ENCODE measurements at regions of chr18 and their contacts with region 1.

Region 1: GRCh38 chr18:26468931-26469340 is 79.4 kb downstream of the KCTD1 start:
- DNase-seq: peak in 1 of 2 experiments; percentile 73
- H3K4me3 ChIP-seq: no peak overlapping the region
- H3K27ac ChIP-seq: no peak overlapping the region
- H3K4me1 ChIP-seq: peaks cover 0 to 3% (median 2%) of the 10 kb centered on the region in 4 experiments; a peak in 5 of 7 replicates
- H3K27me3 ChIP-seq: no peaks in the 10 kb centered on the region
- CTCF ChIP-seq: peak; percentile 75 to 86 (median 75)
- EP300 ChIP-seq: no peak
- POLR2A ChIP-seq: no peak
- RAD21 ChIP-seq: peak; percentile 51 to 63

Region 2: GRCh38 chr18:26376106-26376505 is 92.8 kb before region 1 on chr18:
- CTCF ChIA-PET with region 1: no interaction called
- POLR2A ChIA-PET with region 1: no interaction called
- DNase-seq: no peak
- H3K4me3 ChIP-seq: no peak overlapping the region
- H3K27ac ChIP-seq: no peak overlapping the region
- H3K4me1 ChIP-seq: no peaks in the 10 kb centered on the region
- H3K27me3 ChIP-seq: no peaks in the 10 kb centered on the region
- CTCF ChIP-seq: no peak
- EP300 ChIP-seq: no peak
- POLR2A ChIP-seq: no peak
- RAD21 ChIP-seq: no peak

Region 3: DNA sequence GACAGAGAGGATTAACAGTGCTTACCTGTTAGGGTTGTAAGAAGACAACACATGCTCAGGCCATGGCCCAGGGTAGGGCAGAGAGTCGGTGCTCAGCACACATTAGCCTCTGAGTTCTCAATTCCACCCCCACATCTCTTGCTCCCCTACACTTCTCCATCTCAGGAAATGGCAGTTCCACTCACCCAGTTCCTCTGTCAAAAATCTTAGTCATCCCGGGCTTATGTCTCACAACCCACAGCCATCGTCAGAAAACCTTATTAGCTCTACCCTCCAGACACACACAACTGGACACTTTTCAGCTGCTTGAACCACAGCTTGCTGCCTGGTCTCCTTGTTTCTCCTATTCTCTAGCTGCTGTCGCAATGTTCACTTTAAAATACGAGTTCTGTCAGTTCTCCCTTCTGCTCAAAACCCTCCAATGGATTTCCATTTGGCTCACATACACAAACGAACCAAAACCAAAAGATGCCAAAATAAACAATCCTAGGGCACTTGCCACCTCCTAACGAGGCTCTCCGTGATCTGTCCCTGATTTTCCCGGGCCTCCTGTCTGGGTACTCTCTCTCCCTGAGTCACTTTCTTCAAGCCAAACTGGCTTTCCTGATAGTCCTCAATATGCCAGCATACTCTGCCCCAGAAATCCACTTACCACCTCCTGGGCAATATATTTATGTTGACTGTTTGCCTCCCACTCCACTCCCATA is 10.3 kb before region 1 on chr18:
- CTCF ChIA-PET with region 1: interaction called, 22 read pairs
- POLR2A ChIA-PET with region 1: interaction called, 3 read pairs
- DNase-seq: no peak
- H3K4me3 ChIP-seq: no peak overlapping the region
- H3K27ac ChIP-seq: no peak overlapping the region
- H3K4me1 ChIP-seq: peaks cover 3 to 7% (median 6%) of the 10 kb centered on the region in 4 experiments; a peak in 6 of 7 replicates
- H3K27me3 ChIP-seq: peaks cover 0 to 7% (median 5%) of the 10 kb centered on the region in 4 experiments; a peak in 3 of 7 replicates
- CTCF ChIP-seq: no peak
- EP300 ChIP-seq: no peak
- POLR2A ChIP-seq: no peak
- RAD21 ChIP-seq: no peak

Region 4: DNA sequence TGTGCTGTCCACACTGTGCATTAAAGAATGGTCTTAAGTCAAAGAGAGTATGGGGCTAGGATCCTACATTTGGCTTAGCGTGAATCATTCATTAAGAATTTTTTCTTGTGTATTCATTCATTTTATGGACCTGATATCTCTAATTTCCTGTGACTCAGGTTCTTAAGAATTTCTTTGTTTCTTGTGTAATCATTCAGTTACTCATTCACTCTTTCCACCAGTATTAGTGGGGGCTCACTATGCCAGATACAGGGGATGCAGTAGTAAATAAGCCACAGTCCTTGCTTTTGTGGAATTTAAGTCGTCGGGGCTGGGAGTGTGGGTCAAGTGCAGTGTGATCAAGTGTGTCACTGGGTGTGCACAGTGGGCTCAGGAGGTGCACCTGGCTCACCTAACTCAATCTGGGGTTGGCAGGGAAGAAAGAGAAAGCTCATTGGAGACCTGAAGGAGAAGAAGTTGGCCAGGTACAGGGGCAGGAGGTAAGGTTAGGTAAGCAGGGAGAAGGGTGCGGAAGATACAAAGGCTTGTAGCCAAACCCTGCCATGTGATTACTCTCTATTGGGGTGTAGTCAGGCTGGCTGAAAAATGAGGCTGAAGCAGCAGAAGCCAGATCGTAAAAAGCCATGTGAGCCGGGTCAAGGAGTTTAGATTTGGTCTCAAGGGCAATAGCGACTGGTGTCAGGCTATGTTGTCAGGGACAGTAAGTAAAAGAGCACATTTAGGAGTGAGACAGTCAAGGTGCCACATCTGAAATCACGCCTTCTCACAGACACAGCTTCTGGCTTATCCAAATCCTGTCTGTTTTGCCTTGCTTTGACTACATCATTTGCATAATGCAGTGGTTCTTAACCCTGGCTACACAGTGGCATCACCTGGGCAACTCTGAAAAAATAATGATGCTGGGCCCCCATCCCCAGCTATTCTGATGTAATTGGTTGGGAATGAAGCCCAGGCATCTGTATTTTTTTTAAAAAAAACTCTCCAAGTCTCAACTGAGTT is 12.3 kb after region 1 on chr18:
- CTCF ChIA-PET with region 1: interaction called, 67 read pairs
- POLR2A ChIA-PET with region 1: no interaction called
- DNase-seq: no peak
- H3K4me3 ChIP-seq: no peak overlapping the region
- H3K27ac ChIP-seq: no peak overlapping the region
- H3K4me1 ChIP-seq: peaks cover 9 to 28% (median 21%) of the 10 kb centered on the region in 4 experiments
- H3K27me3 ChIP-seq: peaks cover 0 to 1% (median 0%) of the 10 kb centered on the region in 4 experiments; a peak in 1 of 7 replicates
- CTCF ChIP-seq: no peak
- EP300 ChIP-seq: no peak
- POLR2A ChIP-seq: no peak
- RAD21 ChIP-seq: no peak

Region 5: DNA sequence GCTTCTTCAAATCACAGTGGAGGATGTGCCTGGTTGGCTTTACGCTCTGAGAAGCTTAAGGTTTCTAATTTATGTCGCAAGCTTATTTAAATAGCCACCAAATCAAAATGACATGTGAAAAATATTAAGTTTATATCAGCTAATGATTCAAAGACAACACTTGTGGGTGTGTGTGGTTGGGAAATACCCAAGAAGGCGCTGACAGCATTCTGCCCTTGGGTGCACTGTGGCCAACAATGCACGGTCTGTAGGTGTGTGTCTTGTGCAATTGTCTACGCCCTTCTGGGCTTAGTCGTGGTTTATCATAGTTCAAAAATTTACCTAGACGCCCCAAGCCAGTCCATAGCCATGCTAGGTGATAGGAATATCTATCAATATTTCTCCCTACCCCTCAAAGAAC is 18.5 kb after region 1 on chr18:
- CTCF ChIA-PET with region 1: interaction called, 67 read pairs
- POLR2A ChIA-PET with region 1: no interaction called
- DNase-seq: no peak
- H3K4me3 ChIP-seq: no peak overlapping the region
- H3K27ac ChIP-seq: no peak overlapping the region
- H3K4me1 ChIP-seq: peaks cover 0 to 6% (median 2%) of the 10 kb centered on the region in 4 experiments; a peak in 6 of 7 replicates
- H3K27me3 ChIP-seq: peaks cover 0 to 1% (median 0%) of the 10 kb centered on the region in 4 experiments; a peak in 1 of 7 replicates
- CTCF ChIP-seq: no peak
- EP300 ChIP-seq: no peak
- POLR2A ChIP-seq: no peak
- RAD21 ChIP-seq: no peak

Region 6: GRCh38 chr18:26548429-26549262 is 79.7 kb after region 1 on chr18 and contains the start of gene KCTD1:
- CTCF ChIA-PET with region 1: interaction called, 31 read pairs
- POLR2A ChIA-PET with region 1: no interaction called
- DNase-seq: peak in 1 of 2 experiments; percentile 86
- H3K4me3 ChIP-seq: peak within 1 kb of the TSS; percentile 41 to 80 (median 61)
- H3K27ac ChIP-seq: no peak within 1 kb of the TSS
- H3K4me1 ChIP-seq: peaks cover 3 to 16% (median 6%) of the 10 kb centered on the region in 4 experiments; a peak in 6 of 7 replicates
- H3K27me3 ChIP-seq: peaks cover 26 to 69% (median 53%) of the 10 kb centered on the region in 4 experiments
- CTCF ChIP-seq: no peak
- EP300 ChIP-seq: no peak
- POLR2A ChIP-seq: no peak
- RAD21 ChIP-seq: no peak
- total RNA-seq, gene KCTD1: 14.0 and 17.6 TPM in 2 replicates